A673 (cell line): ENCODE measurements at regions of chr12 and their contacts with region 1.

Region 1: GRCh38 chr12:63911341-63911740 is 66.8 kb downstream of the SRGAP1 start:
- DNase-seq: no peak
- H3K4me3 ChIP-seq: no peak overlapping the region
- H3K27ac ChIP-seq: peak overlapping the region; percentile 35
- H3K4me1 ChIP-seq: peaks cover 52% of the 10 kb centered on the region
- H3K27me3 ChIP-seq: no peaks in the 10 kb centered on the region
- CTCF ChIP-seq: no peak

Region 2: GRCh38 chr12:63924781-63925180 is 13.4 kb after region 1 on chr12:
- CTCF ChIA-PET with region 1: no interaction called
- POLR2A ChIA-PET with region 1: interaction called, 16 read pairs
- intact Hi-C with region 1: no loop called
- DNase-seq: no peak
- H3K4me3 ChIP-seq: no peak overlapping the region
- H3K27ac ChIP-seq: no peak overlapping the region
- H3K4me1 ChIP-seq: peaks cover 3% of the 10 kb centered on the region
- H3K27me3 ChIP-seq: no peaks in the 10 kb centered on the region
- CTCF ChIP-seq: no peak

Region 3: DNA sequence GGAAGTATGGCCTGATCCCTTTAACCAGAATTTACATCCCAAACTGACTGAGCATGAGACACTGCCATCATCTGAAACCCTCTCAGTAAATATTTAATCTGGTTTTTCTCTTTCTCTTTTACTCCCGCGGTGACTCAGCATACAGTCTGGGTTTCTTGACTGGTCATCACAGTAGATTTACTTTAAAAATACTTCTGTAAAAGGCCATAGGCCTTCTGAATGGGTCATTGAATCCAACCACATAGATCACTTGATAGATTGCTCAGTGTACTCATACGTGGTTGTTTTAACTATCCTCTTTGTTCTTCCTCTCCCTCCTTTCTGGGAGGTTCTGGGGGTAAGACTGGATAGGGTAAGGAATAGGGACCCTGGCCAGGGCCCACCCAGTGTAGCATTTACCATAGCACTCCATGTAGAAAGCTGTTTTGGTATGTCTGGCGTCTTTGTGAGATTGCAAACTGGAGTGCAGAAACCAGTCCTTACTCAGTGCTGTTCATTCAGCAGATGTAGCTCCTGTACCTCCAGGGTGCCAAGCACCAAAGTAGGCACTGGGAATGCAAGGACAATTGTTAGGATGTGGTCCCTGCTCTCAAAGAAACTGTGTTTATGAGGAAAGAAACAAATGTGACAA is 98.8 kb after region 1 on chr12:
- CTCF ChIA-PET with region 1: no interaction called
- POLR2A ChIA-PET with region 1: no interaction called
- intact Hi-C with region 1: no loop called
- DNase-seq: no peak
- H3K4me3 ChIP-seq: no peak overlapping the region
- H3K27ac ChIP-seq: no peak overlapping the region
- H3K4me1 ChIP-seq: peaks cover 36% of the 10 kb centered on the region
- H3K27me3 ChIP-seq: no peaks in the 10 kb centered on the region
- CTCF ChIP-seq: no peak

Region 4: DNA sequence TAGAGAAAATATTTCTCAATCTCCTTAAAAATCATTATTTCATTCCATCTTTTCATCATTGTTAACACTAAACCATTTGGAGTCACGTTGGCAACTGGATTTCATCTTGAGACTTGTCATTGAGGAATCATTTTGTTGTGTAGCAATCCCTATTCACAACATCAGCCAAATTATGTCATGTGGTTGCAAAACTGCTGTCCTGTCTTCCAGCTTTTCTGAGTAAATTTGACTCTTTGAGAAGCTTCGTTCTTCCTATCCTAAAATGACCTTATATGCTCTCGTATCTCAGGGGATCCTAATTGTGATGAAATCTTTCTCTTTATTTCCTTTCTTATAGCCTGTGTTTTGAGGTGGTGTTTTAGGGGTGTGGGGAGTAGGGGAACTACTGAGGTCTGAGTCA is 341.3 kb after region 1 on chr12:
- CTCF ChIA-PET with region 1: no interaction called
- POLR2A ChIA-PET with region 1: no interaction called
- intact Hi-C with region 1: no loop called
- DNase-seq: no peak
- H3K4me3 ChIP-seq: no peak overlapping the region
- H3K27ac ChIP-seq: no peak overlapping the region
- H3K4me1 ChIP-seq: no peaks in the 10 kb centered on the region
- H3K27me3 ChIP-seq: no peaks in the 10 kb centered on the region
- CTCF ChIP-seq: no peak